IMR-90 (cell line): ENCODE measurements at regions of chr5 and their contacts with region 1.

Region 1: GRCh38 chr5:135505973-135506372 is 29.8 kb downstream of the NEUROG1 start:
- DNase-seq: peak; percentile 25
- ATAC-seq: peak; percentile 44; the same call in 1 of the 2 replicates
- H3K4me3 ChIP-seq: no peak overlapping the region
- H3K27ac ChIP-seq: no peak overlapping the region
- H3K4me1 ChIP-seq: no peaks in the 10 kb centered on the region
- H3K27me3 ChIP-seq: peaks cover 56% of the 10 kb centered on the region
- CTCF ChIP-seq: no peak
- POLR2A ChIP-seq: no peak
- RAD21 ChIP-seq: no peak

Region 2: GRCh38 chr5:135472141-135472540 is 33.8 kb before region 1 on chr5:
- CTCF ChIA-PET with region 1: no interaction called
- POLR2A ChIA-PET with region 1: no interaction called
- dilution Hi-C with region 1: no loop called
- in situ Hi-C with region 1: no loop called
- intact Hi-C with region 1: no loop called
- DNase-seq: no peak
- ATAC-seq: no peak
- H3K4me3 ChIP-seq: no peak overlapping the region
- H3K27ac ChIP-seq: no peak overlapping the region
- H3K4me1 ChIP-seq: no peaks in the 10 kb centered on the region
- H3K27me3 ChIP-seq: peaks cover 73% of the 10 kb centered on the region
- CTCF ChIP-seq: no peak
- POLR2A ChIP-seq: no peak
- RAD21 ChIP-seq: no peak

Region 3: DNA sequence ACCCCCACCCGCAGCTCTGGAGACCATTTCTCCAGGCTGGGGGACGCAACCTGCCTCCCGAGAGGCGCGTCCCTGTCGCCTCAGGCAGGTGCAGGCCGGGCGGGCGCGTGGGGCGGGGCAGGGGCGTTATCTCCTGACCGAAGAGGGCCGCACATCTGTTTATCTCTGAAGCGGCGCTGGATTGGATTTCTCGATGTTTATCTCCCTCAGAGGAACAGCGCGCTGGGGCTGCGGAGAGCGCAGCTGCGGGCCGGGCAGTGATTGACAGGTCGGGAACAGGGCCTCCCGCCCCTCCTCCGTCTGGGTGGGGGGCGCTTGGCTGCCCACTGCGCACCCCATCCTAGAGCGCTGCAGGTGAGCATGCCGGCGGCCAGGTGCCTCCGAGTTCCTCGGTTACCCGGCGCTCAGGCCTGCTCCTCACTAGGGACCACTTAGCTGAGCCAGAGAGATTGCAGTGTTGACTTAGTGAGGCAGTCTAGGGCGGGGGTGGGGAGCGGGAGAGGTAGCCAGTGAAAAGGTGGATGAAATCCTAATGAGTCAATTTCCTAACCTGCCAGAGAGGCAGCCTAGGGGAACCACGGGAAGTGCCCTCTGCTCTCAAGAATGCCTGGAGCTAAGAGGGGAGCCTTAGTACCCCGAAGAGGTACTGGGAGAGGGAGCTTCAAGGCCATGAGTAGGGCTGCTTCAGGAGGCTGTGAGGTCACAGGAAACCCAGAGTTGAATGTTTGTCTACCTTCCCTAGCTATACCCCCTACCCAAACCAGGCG is 14.2 kb before region 1 on chr5:
- CTCF ChIA-PET with region 1: interaction called, 4 read pairs
- POLR2A ChIA-PET with region 1: interaction called, 28 read pairs
- dilution Hi-C with region 1: no loop called
- in situ Hi-C with region 1: no loop called
- intact Hi-C with region 1: no loop called
- DNase-seq: no peak
- ATAC-seq: no peak
- H3K4me3 ChIP-seq: no peak overlapping the region
- H3K27ac ChIP-seq: no peak overlapping the region
- H3K4me1 ChIP-seq: peaks cover 15% of the 10 kb centered on the region
- H3K27me3 ChIP-seq: peaks cover 39% of the 10 kb centered on the region
- CTCF ChIP-seq: no peak
- POLR2A ChIP-seq: no peak
- RAD21 ChIP-seq: no peak

Region 4: GRCh38 chr5:135526924-135527323 is 21.0 kb after region 1 on chr5:
- CTCF ChIA-PET with region 1: no interaction called
- POLR2A ChIA-PET with region 1: no interaction called
- dilution Hi-C with region 1: no loop called
- in situ Hi-C with region 1: no loop called
- intact Hi-C with region 1: no loop called
- DNase-seq: no peak
- ATAC-seq: no peak
- H3K4me3 ChIP-seq: no peak overlapping the region
- H3K27ac ChIP-seq: no peak overlapping the region
- H3K4me1 ChIP-seq: no peaks in the 10 kb centered on the region
- H3K27me3 ChIP-seq: peaks cover 33% of the 10 kb centered on the region
- CTCF ChIP-seq: no peak
- POLR2A ChIP-seq: no peak
- RAD21 ChIP-seq: no peak

Region 5: DNA sequence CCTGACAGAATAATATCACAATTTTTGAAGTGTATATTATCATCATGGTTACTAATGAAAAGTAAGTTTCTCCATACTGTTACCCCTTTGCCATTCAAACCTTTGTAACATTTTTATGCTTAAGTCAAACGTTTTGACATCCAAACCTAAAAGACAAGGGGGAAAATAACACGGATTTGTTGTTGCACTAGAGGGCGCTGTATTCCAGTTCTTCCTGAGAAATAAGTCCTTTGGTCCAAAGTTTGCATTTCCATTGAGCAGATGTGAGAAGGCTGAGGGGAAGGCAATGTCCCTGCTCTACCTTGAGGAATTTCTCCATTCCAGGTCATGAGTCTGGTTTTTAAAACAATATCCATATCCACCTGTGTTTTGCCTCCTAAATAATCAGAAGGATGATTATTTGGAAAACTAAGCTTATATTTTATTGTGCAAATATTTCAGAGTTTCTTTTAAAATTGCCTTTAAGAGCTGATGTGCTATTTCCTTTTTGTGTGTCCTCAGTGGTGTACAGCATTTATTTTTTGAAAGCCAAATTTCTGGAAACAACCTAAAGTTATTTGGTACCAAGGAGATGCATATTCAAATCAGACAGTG is 439.1 kb after region 1 on chr5:
- CTCF ChIA-PET with region 1: no interaction called
- POLR2A ChIA-PET with region 1: no interaction called
- dilution Hi-C with region 1: no loop called
- in situ Hi-C with region 1: no loop called
- intact Hi-C with region 1: no loop called
- DNase-seq: peak; percentile 89
- ATAC-seq: peak; percentile 82
- H3K4me3 ChIP-seq: no peak overlapping the region
- H3K27ac ChIP-seq: no peak overlapping the region
- H3K4me1 ChIP-seq: no peaks in the 10 kb centered on the region
- H3K27me3 ChIP-seq: no peaks in the 10 kb centered on the region; the same call in 1 of the 2 replicates
- CTCF ChIP-seq: peak; percentile 87
- POLR2A ChIP-seq: no peak
- RAD21 ChIP-seq: peak; percentile 92